Posterior vena cava (tissue), 2 donors: ENCODE measurements at regions of chr9 and their contacts with region 1.

Region 1: GRCh38 chr9:85453850-85454249 is 287.9 kb downstream of the AGTPBP1 start:
- DNase-seq: no peak

Region 2: DNA sequence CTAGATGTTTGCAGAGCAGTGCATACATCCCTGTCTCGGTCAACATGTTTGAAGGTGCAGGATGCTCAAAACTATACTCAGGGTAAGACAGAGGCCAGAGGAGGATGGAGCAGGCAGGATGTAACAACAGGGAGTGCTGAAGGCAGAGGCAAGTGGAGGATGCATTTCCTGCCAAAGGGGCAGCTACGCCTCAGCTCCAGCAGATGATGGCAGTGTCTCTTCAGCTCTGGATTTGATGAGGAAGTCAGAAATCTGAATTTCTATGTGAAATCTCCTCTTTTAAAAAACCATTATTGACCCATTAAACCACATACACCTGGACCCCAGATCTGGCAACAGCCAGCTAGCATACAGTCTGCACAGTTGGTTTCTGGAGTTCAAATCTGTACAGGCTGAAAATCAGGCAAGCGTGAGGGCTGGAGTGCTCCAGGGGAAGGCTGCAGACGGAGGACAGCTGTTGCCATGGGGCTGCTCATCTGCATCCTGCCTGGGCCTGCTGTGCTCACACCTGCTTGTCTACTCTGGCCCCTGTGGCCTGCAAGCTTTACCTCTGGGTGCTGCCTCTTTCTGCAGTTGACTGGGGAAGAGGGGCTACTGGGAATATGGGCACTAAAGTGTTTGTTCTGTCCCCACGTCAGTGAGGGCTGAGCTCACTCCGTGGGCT is 960.4 kb before region 1 on chr9:
- intact Hi-C with region 1: loop called in 1 of 2 experiments (anchors 5 kb)
- DNase-seq: no peak

Region 3: DNA sequence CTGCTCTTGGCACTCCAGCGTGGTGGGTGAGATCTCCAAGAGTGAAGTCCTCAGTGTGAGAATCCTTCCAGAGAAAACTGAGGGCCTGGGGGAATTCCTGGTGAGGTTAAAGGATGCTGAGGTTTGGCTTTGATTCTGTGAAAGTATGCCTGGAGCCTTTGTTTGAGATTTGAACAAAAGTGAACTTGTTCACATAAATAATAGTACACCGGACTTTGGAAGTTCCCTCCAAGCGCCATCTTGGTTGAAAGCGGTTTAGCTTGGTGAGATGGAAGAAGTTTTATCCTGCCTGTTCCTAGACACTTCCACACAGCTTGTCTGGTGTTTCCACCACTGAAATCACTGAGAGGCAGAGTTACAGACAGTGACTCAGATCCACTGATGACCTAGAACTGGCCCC is 497.9 kb before region 1 on chr9:
- intact Hi-C with region 1: no loop called
- DNase-seq: no peak

Region 4: DNA sequence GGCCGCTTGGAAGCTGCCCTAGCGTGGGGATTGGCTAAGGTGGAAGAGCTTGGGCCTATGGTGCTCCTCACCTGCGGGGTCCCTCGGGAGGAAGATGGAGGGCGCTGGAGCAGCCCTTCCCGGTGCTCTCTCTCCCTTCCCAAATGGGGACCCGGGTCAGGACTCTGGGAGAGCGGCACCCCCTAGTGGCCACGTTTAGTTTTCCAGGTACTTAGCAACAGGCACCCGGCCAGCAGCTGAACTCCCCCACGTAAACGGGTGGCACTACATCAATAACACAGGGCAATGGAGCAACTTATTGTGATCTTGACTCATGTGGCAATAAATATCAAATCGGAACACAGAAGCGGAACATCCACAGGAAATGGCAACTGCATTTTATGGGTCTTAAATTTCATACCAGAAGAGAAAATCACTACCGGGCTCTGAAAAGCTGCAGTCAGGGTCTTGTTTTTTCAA is 28.7 kb before region 1 on chr9:
- intact Hi-C with region 1: no loop called
- DNase-seq: peak; percentile 86